ENCODE measurements at regions of chr7 and their contacts with region 1.

Region 1: DNA sequence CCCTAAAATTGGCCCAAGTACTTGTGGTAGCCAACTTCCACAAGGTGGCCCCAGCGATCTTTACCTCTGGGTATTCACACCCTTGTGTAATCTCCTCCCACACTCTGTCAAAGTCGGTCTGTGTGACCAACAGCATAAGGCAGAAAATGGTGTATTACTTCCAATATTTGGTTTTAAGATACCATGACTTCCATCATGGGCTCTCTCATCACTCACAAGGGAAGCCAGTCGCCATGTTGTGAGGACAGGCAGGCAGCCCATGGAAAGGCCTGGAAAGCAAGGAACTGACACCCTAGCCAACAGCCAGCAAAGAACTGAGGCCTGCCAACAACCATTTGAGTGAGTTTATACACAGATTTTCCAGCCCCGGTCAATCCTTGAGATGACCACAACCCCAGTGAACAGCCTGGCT is 91.0 kb upstream of the KMT2E start:
- DNase-seq: peak; percentile 65 to 76
- H3K4me3 ChIP-seq: no peak overlapping the region
- H3K27ac ChIP-seq: no peak overlapping the region
- H3K4me1 ChIP-seq: no peaks in the 10 kb centered on the region
- H3K27me3 ChIP-seq: no peaks in the 10 kb centered on the region
- CTCF ChIP-seq: peak; percentile 73

Region 2: GRCh38 chr7:103668279-103668941 is 1254.6 kb before region 1 on chr7:
- CTCF ChIA-PET with region 1: no interaction called
- POLR2A ChIA-PET with region 1: no interaction called
- intact Hi-C with region 1: no loop called
- DNase-seq: no peak
- H3K4me3 ChIP-seq: no peak overlapping the region
- H3K27ac ChIP-seq: no peak overlapping the region
- H3K4me1 ChIP-seq: no peaks in the 10 kb centered on the region
- H3K27me3 ChIP-seq: no peaks in the 10 kb centered on the region
- CTCF ChIP-seq: no peak

Region 3: DNA sequence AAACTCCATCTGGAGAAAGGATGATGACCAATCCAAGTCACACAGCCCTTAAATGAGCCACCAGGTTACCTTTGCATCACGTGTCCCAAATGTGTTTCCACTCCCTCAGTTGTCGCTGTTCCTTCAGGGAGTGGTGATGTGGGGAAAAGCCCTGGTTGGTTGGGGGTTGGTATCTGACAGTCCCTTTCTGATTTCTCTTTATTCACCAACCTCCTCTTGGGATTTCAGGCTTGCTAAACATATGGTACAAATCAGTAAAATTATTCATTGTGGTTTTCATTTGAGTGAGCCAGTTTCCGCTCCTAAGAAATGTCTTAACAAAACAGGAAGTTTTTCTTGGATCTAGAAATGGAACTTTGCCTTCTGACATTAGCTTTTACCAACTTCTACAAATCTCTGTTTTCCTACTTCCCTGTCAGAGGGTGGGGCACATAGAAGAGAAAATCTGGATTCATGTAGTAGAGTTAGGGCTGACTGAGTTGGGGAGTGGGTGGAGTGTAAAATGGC is 50.9 kb after region 1 on chr7:
- CTCF ChIA-PET with region 1: interaction called, 12 read pairs
- POLR2A ChIA-PET with region 1: no interaction called
- intact Hi-C with region 1: no loop called
- DNase-seq: no peak
- H3K4me3 ChIP-seq: no peak overlapping the region
- H3K27ac ChIP-seq: no peak overlapping the region
- H3K4me1 ChIP-seq: no peaks in the 10 kb centered on the region
- H3K27me3 ChIP-seq: no peaks in the 10 kb centered on the region
- CTCF ChIP-seq: no peak

Region 4: DNA sequence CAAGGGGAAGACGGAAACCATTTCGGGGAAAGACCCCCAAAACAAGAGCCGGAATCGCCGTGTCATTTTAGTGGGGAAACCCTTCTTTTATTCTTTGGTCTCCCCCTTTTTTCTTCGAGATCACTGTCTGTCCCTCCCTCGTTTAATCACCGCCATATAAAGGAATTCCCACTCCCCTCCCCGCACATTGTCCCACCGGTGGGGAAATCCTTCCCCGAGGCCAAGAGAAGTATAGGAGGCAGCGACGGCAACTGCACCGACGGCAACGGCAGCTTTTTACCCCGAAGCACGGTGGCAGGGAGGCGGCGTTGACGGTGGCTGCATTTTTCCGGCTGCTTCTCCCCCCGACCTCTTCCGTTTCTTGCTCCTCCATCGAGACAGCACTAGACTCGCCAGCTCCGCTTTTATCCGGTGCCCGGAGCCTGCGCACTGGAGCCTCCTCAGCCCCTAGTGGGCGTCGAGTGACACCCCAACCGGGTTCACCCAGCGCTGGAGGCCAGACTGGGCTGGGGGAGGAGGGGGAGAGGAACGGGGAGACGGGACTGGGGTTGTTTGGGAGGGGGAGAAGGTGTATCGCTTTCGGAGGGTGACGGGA is 90.3 kb after region 1 on chr7:
- CTCF ChIA-PET with region 1: no interaction called
- POLR2A ChIA-PET with region 1: no interaction called
- intact Hi-C with region 1: loop called (anchors 1 kb)
- DNase-seq: peak; percentile 74 to 92
- H3K4me3 ChIP-seq: peak overlapping the region; percentile 95
- H3K27ac ChIP-seq: peak overlapping the region; percentile 98
- H3K4me1 ChIP-seq: peaks cover 55% of the 10 kb centered on the region
- H3K27me3 ChIP-seq: no peaks in the 10 kb centered on the region
- CTCF ChIP-seq: peak; percentile 55; the same call in 1 of the 2 replicates

Region 5: DNA sequence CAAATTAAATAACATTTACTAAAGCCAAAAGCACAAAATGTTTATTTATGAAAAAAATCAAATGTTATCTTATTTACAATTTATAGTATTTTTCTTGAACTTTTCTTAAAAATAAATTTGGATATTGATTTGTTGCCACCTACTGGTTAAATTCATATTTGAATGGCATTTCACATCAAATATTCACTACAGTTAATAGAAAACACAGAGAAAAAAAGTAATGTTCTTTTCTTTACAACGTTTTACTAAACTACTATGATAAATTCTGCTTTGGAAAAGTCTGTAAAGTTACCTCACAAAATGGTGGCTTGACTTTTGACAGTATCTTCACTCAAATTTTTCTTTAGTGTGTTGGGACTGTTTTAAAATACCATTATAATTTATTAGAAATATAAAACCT is 413.0 kb after region 1 on chr7:
- CTCF ChIA-PET with region 1: interaction called, 9 read pairs
- POLR2A ChIA-PET with region 1: no interaction called
- intact Hi-C with region 1: loop called (anchors 1 kb)
- DNase-seq: no peak
- H3K4me3 ChIP-seq: no peak overlapping the region
- H3K27ac ChIP-seq: no peak overlapping the region
- H3K4me1 ChIP-seq: no peaks in the 10 kb centered on the region
- H3K27me3 ChIP-seq: no peaks in the 10 kb centered on the region
- CTCF ChIP-seq: peak; percentile 71

Region 6: DNA sequence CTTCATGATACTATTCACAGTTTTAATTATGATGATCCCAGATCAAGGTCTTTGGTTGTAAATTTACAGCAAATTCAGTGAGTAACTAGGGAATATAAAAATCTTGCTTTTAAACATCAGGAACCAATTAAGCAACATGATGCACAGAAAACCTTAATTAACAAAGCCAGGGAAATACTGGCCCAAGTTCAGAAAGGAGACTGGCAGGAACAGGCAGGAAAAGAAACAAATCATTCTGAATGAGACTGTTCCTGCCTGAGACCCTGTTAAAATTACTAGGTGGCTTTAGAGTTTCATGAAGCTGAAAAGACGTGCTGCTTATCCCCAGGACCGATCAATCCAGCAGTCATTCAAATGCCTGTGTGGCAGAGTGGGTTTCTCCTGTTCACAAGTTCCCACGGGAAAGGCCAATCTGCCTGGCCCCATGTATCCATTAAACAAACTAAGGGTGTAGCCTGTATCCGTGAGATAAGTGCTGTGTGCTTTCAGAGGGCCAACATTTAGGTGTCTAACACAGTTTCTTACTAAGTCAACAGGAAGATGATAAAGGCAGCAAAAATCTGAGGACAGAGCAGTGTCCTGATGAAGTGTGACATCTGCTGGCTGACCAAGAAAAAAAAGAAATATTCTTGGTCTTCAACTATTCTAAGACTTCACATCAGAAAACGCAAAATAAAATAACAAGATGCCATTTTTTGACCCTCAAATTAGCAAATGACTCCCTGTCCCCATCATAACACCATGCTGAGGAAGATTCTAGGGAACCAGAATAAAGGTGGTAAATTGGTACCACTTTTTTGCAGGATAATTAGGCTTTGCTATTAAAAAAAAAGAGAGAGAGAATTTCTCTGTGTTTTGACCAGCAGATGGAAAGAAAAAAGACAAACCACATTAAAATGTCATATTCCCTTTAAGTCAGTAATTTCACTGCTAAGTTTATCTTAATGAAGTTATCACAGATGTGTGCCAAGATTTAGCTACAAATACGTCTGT is 564.9 kb after region 1 on chr7:
- CTCF ChIA-PET with region 1: no interaction called
- POLR2A ChIA-PET with region 1: no interaction called
- intact Hi-C with region 1: loop called (anchors 1 kb)
- DNase-seq: peak in 1 of 2 experiments; percentile 6
- H3K4me3 ChIP-seq: no peak overlapping the region
- H3K27ac ChIP-seq: no peak overlapping the region; the same call in 1 of the 2 replicates
- H3K4me1 ChIP-seq: no peaks in the 10 kb centered on the region
- H3K27me3 ChIP-seq: no peaks in the 10 kb centered on the region
- CTCF ChIP-seq: peak; percentile 46; the same call in 1 of the 2 replicates

Region 7: DNA sequence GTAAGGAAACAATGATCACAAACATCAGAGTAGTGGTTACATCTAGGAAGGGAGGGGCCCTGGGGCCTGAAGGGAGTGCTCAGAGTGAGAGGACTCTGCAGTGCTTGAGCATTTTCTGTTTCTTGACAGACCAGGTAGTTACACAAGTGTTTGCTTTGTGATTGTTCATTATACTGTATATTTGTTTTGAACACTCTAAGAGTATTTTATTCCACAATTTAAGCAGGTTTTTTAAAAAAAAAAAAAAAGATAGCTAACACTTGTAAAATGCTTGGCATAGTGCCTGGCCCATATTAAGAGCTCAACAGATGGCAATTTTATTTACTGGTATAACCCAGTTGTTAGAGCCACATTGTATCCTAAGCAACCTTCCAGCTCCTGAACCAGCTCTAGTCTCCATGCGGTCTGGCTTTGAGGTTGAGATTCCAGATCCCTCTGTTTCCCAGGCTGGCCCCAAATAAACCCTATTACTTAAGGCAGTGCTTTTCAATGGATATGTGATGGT is 973.4 kb after region 1 on chr7:
- CTCF ChIA-PET with region 1: no interaction called
- POLR2A ChIA-PET with region 1: no interaction called
- intact Hi-C with region 1: no loop called
- DNase-seq: no peak
- H3K4me3 ChIP-seq: no peak overlapping the region
- H3K27ac ChIP-seq: no peak overlapping the region
- H3K4me1 ChIP-seq: no peaks in the 10 kb centered on the region
- H3K27me3 ChIP-seq: no peaks in the 10 kb centered on the region
- CTCF ChIP-seq: no peak

Region 8: DNA sequence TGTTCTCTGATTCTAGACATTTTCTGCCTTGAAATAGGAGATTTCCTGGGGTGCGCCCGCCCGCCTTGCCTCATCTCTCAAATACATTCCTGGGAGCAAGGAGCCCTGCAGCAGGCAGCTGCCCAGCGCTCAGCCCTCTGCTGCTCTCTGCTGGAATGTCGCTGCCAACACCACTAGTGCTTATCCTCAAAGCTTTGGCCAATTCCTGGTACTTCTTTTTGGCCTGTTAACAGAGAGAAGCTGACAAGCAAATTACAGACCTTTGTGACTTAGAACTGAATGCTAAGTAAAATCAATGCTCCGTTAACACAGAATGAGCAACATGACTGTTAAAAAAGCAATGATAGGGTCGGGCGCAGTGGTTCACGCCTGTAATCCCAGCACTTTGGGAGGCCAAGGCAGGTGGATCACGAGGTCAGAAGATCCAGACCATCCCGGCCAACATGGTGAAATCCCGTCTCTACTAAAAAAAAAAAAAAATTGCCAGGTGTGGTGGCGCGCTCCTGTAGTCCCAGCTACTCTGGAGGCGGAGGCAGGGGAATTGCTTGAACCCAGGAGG is 1231.0 kb after region 1 on chr7:
- CTCF ChIA-PET with region 1: no interaction called
- POLR2A ChIA-PET with region 1: no interaction called
- intact Hi-C with region 1: loop called (anchors 10 kb)
- DNase-seq: peak; percentile 68 to 89
- H3K4me3 ChIP-seq: no peak overlapping the region
- H3K27ac ChIP-seq: no peak overlapping the region
- H3K4me1 ChIP-seq: peaks cover 12% of the 10 kb centered on the region
- H3K27me3 ChIP-seq: no peaks in the 10 kb centered on the region
- CTCF ChIP-seq: peak; percentile 94

Measured in PC-9 (cell line).